Activated CD4-positive, alpha-beta T cell treated with anti-CD3 and anti-CD28 coated beads for 36 hours (primary cell): ENCODE measurements at regions of chr9 and their contacts with region 1.

Region 1: DNA sequence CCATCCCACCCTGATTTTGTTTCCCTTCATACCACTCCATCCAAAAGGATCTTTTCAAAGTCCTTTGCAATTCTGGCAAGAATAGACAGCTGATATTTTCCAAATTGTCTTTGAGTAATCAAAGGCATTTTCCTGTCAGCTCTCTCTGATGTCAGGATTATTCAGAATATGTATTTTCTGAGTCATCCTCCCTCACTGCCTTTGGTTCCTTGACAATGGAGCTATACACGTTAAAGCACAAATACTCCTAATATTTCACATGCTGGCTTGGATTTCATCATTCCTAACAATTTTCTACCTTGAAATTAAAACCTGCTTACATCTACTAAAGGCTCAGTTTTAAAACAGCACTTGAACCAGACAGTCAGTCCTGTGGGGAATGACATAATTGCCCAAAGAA is 379.4 kb downstream of the GADD45G start:
- DNase-seq: no peak
- ATAC-seq: peak; percentile 56
- H3K4me3 Mint-ChIP-seq: peak overlapping the region; percentile 27
- H3K27ac Mint-ChIP-seq: peak overlapping the region; percentile 89
- H3K4me1 Mint-ChIP-seq: peaks cover 47% of the 10 kb centered on the region
- H3K27me3 Mint-ChIP-seq: peaks cover 33% of the 10 kb centered on the region

Region 2: DNA sequence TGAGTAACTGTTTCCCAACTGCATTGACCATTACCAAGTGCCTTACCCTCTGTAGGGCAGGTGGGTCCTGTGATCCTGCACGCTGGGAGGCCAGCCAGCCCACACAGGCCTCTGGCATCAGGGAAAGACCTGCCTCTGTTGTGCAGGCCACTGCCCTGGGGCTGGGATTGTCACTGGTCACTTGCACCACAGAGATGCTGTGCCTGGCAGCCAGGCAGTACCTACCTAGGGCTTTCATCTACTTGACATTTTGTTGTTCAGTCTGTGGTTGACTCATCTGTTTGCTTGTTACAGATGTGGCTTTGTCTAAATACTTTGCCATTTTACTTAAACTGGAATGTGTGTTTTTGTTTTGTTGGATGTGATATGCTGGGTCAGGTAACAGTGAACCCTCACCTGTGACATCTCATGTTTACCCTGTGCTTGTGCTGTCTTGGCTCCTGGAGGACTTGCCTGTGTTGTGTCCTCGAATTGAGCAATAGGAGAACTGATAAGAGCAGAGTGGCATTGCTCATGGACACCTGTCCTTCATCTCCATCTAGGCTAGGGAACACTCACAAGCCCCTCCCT is 633.1 kb before region 1 on chr9:
- CTCF ChIA-PET with region 1: no interaction called
- POLR2A ChIA-PET with region 1: no interaction called
- intact Hi-C with region 1: no loop called
- DNase-seq: no peak
- ATAC-seq: no peak
- H3K4me3 Mint-ChIP-seq: no peak overlapping the region
- H3K27ac Mint-ChIP-seq: peak overlapping the region; percentile 11
- H3K4me1 Mint-ChIP-seq: peaks cover 17% of the 10 kb centered on the region
- H3K27me3 Mint-ChIP-seq: no peaks in the 10 kb centered on the region

Region 3: GRCh38 chr9:89410641-89411350 is 573.4 kb before region 1 on chr9:
- CTCF ChIA-PET with region 1: no interaction called
- POLR2A ChIA-PET with region 1: no interaction called
- intact Hi-C with region 1: loop called in 1 of 2 experiments (anchors 5 kb)
- DNase-seq: peak; percentile 85
- ATAC-seq: peak; percentile 81
- H3K4me3 Mint-ChIP-seq: peak overlapping the region; percentile 50
- H3K27ac Mint-ChIP-seq: peak overlapping the region; percentile 92
- H3K4me1 Mint-ChIP-seq: peaks cover 90% of the 10 kb centered on the region
- H3K27me3 Mint-ChIP-seq: no peaks in the 10 kb centered on the region

Region 4: DNA sequence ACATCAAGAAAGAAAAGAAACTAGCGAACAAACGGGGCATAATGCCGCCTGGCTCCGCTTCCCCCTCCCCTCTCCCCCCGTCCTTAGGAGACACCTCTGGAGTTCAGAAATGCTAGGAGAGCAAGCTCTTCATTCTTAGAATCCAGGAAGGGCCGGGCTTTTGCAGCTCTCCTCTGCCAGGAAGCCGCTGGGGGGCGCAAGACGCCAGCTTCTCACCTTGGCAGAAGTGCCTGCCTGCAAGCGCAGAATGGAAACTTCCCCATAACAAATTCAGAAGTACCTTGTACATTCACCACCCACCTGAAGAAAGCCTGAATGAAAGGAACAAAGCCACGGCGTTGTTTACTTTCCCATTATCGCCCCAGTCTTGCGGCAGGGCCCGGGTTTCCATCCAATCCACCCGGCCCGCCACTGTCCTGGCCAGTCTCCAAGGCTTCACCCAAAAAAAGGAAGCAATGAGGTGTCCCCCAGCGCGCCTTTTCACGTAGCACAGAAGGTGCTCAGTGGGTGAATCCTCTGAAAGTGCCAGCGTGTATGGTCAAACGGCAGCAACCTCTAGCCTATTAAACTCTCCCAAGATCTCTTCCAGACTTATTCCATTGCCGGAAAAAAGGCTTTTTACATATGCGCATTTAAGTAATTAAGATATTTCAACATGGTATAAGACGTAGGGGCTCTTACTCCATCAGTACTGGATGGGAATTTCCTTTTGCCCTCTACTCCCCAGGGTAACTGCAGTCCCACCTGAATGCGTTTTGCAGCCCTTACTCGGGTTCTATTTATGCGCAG is 381.0 kb before region 1 on chr9:
- CTCF ChIA-PET with region 1: interaction called, 8 read pairs
- POLR2A ChIA-PET with region 1: no interaction called
- intact Hi-C with region 1: loop called (anchors 1 kb)
- DNase-seq: peak; percentile 95
- ATAC-seq: peak; percentile 23
- H3K4me3 Mint-ChIP-seq: peak overlapping the region; percentile 66
- H3K27ac Mint-ChIP-seq: no peak overlapping the region
- H3K4me1 Mint-ChIP-seq: peaks cover 33% of the 10 kb centered on the region
- H3K27me3 Mint-ChIP-seq: no peaks in the 10 kb centered on the region

Region 5: GRCh38 chr9:89969156-89969675 is 15.0 kb before region 1 on chr9:
- CTCF ChIA-PET with region 1: no interaction called
- POLR2A ChIA-PET with region 1: no interaction called
- intact Hi-C with region 1: loop called in 1 of 2 experiments (anchors 1 kb)
- DNase-seq: peak; percentile 59
- ATAC-seq: peak; percentile 93
- H3K4me3 Mint-ChIP-seq: no peak overlapping the region
- H3K27ac Mint-ChIP-seq: no peak overlapping the region
- H3K4me1 Mint-ChIP-seq: peaks cover 29% of the 10 kb centered on the region
- H3K27me3 Mint-ChIP-seq: peaks cover 3% of the 10 kb centered on the region

Region 6: DNA sequence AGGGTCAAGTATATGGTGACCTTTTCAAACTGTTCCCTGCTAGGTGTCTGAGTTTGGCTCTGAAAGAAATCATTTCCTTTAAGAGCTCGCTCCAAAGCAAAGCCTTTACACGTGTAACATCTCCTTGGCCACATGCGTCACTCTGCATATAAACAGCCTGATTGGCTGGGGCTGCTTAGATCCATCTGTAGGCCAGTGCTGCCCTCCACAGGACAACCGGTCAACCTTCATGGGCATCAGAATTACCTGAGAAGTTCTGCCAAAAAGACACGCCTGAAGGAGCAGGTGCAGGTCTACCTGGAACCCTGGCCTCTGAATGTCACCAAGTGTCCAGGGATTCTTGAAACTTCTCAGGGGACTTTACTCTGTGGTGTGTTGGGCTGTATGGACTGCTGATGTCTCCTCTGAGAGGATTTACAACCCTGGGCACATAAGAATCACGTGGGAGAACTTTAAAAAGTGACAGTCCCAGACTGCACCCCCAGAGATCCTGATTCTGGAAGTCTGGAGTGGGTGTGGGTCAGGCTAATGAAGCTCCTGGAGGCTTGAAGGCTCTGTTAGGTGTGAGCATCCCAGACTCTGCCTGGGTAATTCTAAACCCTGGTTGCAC is 118.2 kb after region 1 on chr9:
- CTCF ChIA-PET with region 1: interaction called, 3 read pairs
- POLR2A ChIA-PET with region 1: no interaction called
- intact Hi-C with region 1: loop called in 1 of 2 experiments (anchors 10 kb)
- DNase-seq: peak; percentile 90
- ATAC-seq: peak; percentile 100
- H3K4me3 Mint-ChIP-seq: no peak overlapping the region
- H3K27ac Mint-ChIP-seq: no peak overlapping the region
- H3K4me1 Mint-ChIP-seq: peaks cover 3% of the 10 kb centered on the region
- H3K27me3 Mint-ChIP-seq: peaks cover 2% of the 10 kb centered on the region